K562 (cell line): ENCODE measurements at regions of chr9 and their contacts with region 1.

Region 1: DNA sequence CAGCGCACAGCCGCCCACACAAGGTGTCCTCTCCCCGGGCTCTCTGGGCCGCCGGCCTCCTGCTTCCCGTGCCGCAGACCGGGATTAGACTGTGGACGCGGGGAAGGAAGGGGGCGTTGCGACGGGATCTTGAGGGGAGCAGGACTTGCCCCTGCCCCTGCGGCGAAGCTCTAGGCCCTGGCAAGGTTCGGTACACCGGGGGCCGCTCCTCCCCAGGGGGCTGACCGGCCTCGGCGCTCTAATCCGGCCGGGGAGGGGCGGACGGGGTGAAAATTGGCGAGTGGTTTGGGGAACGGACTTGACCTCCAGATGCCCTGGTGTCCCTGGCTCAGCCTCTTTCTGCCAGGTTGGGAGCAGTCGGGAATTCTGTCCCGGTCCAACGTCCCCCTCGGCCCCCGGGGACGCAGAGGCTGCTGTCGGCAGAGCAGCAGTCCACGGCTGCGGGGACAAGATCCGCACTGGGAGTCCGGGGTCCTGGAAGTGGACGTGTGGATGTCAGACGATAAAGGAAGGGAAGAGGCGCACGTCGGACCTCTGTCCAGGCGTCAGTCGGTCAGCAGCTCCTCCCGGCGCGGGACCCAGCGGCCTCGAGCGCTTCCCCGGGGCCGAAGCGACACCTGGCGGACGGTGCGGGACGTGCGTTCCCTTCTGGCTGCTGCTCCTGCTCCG is 1.9 kb upstream of the CNTFR start:
- DNase-seq: peak; percentile 79 to 84 (median 81)
- ATAC-seq: peak; percentile 99
- H3K4me3 ChIP-seq: no peak overlapping the region
- H3K27ac ChIP-seq: no peak overlapping the region
- H3K4me1 ChIP-seq: peaks cover 0 to 34% of the 10 kb centered on the region in 2 experiments; a peak in 2 of 5 replicates
- H3K27me3 ChIP-seq: peaks cover 10 to 47% of the 10 kb centered on the region in 2 experiments
- CTCF ChIP-seq: peak; percentile 67 to 93 (median 85)
- EP300 ChIP-seq: no peak
- POLR2A ChIP-seq: no peak
- RAD21 ChIP-seq: peak; percentile 63 to 90

Region 2: GRCh38 chr9:34500623-34501267 is 90.6 kb before region 1 on chr9:
- CTCF ChIA-PET with region 1: no interaction called
- POLR2A ChIA-PET with region 1: no interaction called
- in situ Hi-C with region 1: no loop called
- intact Hi-C with region 1: loop called (anchors 5 kb)
- DNase-seq: peak; percentile 60 to 75 (median 68)
- ATAC-seq: peak; percentile 79
- H3K4me3 ChIP-seq: no peak overlapping the region
- H3K27ac ChIP-seq: no peak overlapping the region
- H3K4me1 ChIP-seq: no peaks in the 10 kb centered on the region
- H3K27me3 ChIP-seq: no peaks in the 10 kb centered on the region; a peak in 1 of 5 replicates
- CTCF ChIP-seq: peak; percentile 85 to 88 (median 85)
- EP300 ChIP-seq: no peak
- POLR2A ChIP-seq: no peak
- RAD21 ChIP-seq: peak; percentile 70 to 85